MCF 10A (cell line): ENCODE measurements at regions of chr12 and their contacts with region 1.

Region 1: GRCh38 chr12:75623631-75624118 is 112.3 kb upstream of the KRR1 start:
- DNase-seq: peak; percentile 97
- H3K4me3 Mint-ChIP-seq: no peak overlapping the region
- H3K27ac Mint-ChIP-seq: peak overlapping the region; percentile 82
- H3K4me1 Mint-ChIP-seq: peaks cover 24% of the 10 kb centered on the region
- H3K27me3 Mint-ChIP-seq: no peaks in the 10 kb centered on the region
- CTCF ChIP-seq: peak; percentile 68

Region 2: DNA sequence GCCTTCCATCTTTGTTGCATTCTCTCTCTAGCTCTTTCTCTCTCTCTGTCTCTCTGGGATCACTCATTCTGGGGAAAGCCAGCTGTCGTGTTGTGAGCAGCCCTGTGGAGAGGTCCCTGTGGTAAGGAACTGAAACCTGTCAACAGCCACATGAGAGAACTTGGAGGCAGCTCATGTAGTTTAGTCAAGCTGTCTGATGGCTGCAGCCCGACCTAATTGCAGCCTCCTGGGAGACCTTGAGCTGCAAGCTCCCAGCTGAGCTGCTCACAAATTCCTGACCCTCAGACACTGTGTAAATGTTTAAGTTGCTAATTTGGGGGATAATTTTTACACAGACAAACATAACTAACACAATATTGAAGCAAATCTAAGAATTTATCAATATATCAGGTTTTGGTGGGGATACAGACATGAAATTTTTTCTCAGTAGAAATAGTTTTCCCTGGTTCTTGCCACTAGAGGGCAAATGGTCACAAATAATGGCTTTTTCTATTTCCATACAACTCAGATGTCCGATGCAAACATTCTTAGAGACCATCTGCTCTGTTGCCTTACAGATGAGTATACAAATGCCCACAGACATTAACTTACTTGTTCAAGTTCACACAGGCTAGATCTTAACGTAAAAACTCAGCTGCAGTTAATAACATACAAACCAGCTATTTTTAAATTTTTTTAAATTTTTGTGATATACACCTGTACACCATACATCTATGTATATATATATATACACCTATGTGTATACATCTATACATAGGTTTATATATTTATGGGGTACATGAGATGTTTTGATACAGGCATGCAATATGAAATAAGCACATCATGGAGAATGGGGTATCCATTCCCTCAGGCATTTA is 96.8 kb before region 1 on chr12:
- CTCF ChIA-PET with region 1: interaction called, 11 read pairs
- POLR2A ChIA-PET with region 1: no interaction called
- intact Hi-C with region 1: loop called (anchors 2 kb)
- DNase-seq: peak; percentile 59
- H3K4me3 Mint-ChIP-seq: no peak overlapping the region
- H3K27ac Mint-ChIP-seq: no peak overlapping the region
- H3K4me1 Mint-ChIP-seq: no peaks in the 10 kb centered on the region
- H3K27me3 Mint-ChIP-seq: no peaks in the 10 kb centered on the region
- CTCF ChIP-seq: peak; percentile 55

Region 3: GRCh38 chr12:75611041-75611440 is 12.6 kb before region 1 on chr12:
- CTCF ChIA-PET with region 1: interaction called, 10 read pairs
- POLR2A ChIA-PET with region 1: no interaction called
- intact Hi-C with region 1: no loop called
- DNase-seq: no peak
- H3K4me3 Mint-ChIP-seq: no peak overlapping the region
- H3K27ac Mint-ChIP-seq: no peak overlapping the region
- H3K4me1 Mint-ChIP-seq: peaks cover 21% of the 10 kb centered on the region
- H3K27me3 Mint-ChIP-seq: no peaks in the 10 kb centered on the region
- CTCF ChIP-seq: no peak

Region 4: GRCh38 chr12:75814851-75815754 is 191.4 kb after region 1 on chr12:
- CTCF ChIA-PET with region 1: interaction called, 12 read pairs
- POLR2A ChIA-PET with region 1: interaction called, 7 read pairs
- intact Hi-C with region 1: loop called (anchors 2 kb)
- DNase-seq: peak; percentile 37
- H3K4me3 Mint-ChIP-seq: no peak overlapping the region
- H3K27ac Mint-ChIP-seq: peak overlapping the region; percentile 37
- H3K4me1 Mint-ChIP-seq: peaks cover 8% of the 10 kb centered on the region
- H3K27me3 Mint-ChIP-seq: no peaks in the 10 kb centered on the region
- CTCF ChIP-seq: no peak

Region 5: DNA sequence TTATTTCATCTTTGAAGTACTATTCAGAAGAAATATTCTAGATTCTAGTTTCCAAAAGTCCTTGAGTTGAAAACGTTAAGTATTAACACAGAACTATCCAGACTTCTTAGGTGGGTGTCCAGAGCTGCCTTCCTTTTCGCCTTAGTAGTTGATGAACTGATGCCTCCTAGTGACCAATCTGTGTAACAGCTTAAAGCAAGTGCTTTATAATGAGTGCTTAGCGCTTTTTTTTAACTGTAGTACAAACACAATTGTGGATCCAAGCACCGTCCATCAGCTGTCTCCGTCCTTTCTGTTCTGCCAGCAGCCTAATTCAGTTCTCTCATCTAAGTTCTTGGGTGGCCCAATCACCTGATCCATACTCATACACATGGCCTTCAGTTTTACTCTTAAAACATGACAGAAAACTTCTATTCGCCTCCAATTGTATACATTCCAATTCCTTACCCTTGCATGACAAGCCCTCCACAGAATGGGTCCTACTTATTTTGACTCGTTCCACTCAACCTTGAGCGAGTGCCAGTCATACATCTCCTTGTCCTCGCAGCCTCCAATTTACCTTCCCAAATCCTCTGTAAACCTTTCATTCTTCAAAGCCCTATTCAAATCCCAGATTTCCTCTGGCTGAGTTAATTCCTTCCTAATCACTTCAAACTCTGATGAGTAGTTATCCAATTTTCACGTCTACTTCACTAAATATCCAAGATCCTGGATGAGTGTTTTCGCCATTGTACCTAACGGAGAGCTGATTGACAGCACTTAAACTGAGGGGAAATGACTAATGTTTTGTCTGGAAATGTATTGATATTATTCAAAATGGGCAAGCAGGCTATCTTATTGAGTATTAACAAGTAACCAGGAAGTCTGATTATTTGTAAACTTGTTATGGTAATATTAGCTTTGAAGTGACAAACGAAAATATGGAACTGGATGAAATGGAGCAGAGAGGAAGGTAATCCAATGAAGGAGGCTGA is 413.7 kb after region 1 on chr12:
- CTCF ChIA-PET with region 1: interaction called, 84 read pairs
- POLR2A ChIA-PET with region 1: interaction called, 66 read pairs
- intact Hi-C with region 1: loop called (anchors 1 kb)
- DNase-seq: peak; percentile 80
- H3K4me3 Mint-ChIP-seq: no peak overlapping the region
- H3K27ac Mint-ChIP-seq: no peak overlapping the region
- H3K4me1 Mint-ChIP-seq: peaks cover 32% of the 10 kb centered on the region
- H3K27me3 Mint-ChIP-seq: no peaks in the 10 kb centered on the region
- CTCF ChIP-seq: peak; percentile 77